Activated B cell treated with CpG ODN at 0.5 μM for 24 hours (primary cell): ENCODE measurements at regions of chr14 and their contacts with region 1.

Region 1: GRCh38 chr14:49852301-49853157 is at the start of gene NEMF:
- DNase-seq: peak; percentile 78
- ATAC-seq: peak; percentile 83
- H3K4me3 Mint-ChIP-seq: peak within 1 kb of the TSS; percentile 99
- H3K27ac Mint-ChIP-seq: peak within 1 kb of the TSS; percentile 98
- H3K4me1 Mint-ChIP-seq: peaks cover 47% of the 10 kb centered on the region
- H3K27me3 Mint-ChIP-seq: no peaks in the 10 kb centered on the region
- CTCF ChIP-seq: peak; percentile 27
- total RNA-seq, gene NEMF: 99.1 and 110 TPM in 2 replicates

Region 2: DNA sequence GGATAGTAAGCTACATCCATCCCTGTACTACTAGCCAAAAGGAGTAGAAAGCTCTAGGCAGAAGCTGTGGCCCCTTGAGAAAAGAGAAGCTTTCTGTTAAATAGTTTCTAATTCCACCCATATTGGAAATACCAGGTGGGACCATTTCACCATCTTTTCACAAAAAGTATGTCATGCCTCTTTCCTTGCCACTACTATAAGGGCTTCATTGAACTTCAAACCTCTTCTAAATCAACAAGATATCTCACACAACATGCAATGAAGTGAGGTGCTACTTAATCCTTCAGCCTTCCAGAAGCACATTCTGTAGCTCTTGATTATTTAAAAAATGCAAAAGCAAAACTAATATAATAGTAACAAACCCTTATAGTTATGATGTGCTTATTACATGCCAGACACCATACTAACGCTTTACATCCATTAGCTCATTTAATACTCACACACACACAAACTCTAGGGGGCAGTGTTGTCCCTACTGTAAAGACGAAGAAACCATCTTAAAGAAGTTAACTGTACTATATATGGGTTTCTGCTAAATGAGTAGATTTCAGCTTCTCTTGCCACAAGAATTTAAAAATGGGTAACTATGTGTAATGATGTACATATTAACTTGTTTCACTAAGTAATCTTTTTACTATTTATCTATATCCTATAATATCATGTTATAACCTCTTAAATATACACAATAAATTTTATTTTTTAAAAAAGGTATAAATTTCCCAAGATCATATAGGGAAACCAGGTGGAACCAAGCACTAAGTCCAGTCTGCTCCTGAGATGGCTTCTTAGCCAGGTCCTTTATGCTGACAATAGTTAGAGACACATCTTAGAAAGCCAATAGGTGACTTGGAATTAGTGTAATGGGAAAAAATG is 390.8 kb before region 1 on chr14:
- CTCF ChIA-PET with region 1: interaction called, 13 read pairs
- POLR2A ChIA-PET with region 1: no interaction called
- intact Hi-C with region 1: no loop called
- DNase-seq: no peak
- ATAC-seq: peak; percentile 81
- H3K4me3 Mint-ChIP-seq: no peak overlapping the region
- H3K27ac Mint-ChIP-seq: no peak overlapping the region
- H3K4me1 Mint-ChIP-seq: no peaks in the 10 kb centered on the region
- H3K27me3 Mint-ChIP-seq: peaks cover 5% of the 10 kb centered on the region
- CTCF ChIP-seq: peak; percentile 62

Region 3: DNA sequence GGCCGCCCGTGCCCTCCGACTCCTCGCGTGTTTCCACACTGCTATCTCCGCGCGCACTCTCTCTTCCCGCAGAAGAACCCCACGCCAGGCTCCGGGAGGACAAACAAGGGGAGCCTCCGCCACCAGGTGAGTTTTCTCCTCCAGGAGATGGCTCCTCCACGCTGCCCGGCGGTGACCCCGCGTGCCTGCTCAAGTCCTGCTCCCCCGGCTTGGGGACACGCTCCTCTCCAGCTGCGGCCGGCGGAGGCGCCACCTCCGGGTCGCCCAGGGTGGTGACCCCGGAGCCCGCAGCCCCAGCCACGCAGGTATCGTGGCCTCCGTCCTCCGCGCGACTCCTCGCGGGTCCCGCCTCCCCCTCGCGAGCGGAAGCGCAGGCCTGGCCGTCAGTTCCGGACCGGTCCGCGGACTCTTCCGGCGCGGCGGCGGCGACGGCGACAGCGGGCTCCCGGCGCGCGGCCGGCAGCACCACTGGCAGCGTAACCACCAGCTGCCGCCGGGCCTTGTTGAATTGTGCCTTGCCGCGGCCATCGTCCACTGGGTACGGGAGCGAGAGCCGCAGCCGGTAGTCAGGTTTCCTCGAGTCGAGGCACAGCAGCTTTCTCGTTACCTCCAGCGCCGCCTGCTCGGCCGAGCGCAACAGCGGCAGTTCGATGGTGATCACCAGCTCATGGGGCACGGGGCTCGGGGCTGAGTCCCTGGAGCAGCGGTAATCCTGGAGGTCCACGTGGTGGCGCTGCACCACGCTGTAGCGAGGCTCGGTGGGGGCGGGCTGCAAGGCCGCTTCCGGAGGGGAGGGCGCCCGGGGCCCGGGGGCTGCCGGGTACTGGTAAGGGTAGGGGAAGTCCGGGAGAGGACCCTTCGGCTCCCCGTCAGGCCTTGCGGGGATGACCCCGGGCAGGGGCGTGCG is 218.6 kb before region 1 on chr14:
- CTCF ChIA-PET with region 1: interaction called, 6 read pairs
- POLR2A ChIA-PET with region 1: interaction called, 29 read pairs
- intact Hi-C with region 1: loop called (anchors 1 kb)
- DNase-seq: peak; percentile 92
- ATAC-seq: peak; percentile 80
- H3K4me3 Mint-ChIP-seq: peak overlapping the region; percentile 96
- H3K27ac Mint-ChIP-seq: peak overlapping the region; percentile 98
- H3K4me1 Mint-ChIP-seq: peaks cover 66% of the 10 kb centered on the region
- H3K27me3 Mint-ChIP-seq: no peaks in the 10 kb centered on the region
- CTCF ChIP-seq: no peak

Region 4: GRCh38 chr14:49867831-49868723 is 15.5 kb after region 1 on chr14:
- CTCF ChIA-PET with region 1: interaction called, 77 read pairs
- POLR2A ChIA-PET with region 1: interaction called, 105 read pairs
- intact Hi-C with region 1: no loop called
- DNase-seq: peak; percentile 85
- ATAC-seq: peak; percentile 84
- H3K4me3 Mint-ChIP-seq: peak overlapping the region; percentile 95
- H3K27ac Mint-ChIP-seq: peak overlapping the region; percentile 100
- H3K4me1 Mint-ChIP-seq: peaks cover 44% of the 10 kb centered on the region
- H3K27me3 Mint-ChIP-seq: no peaks in the 10 kb centered on the region
- CTCF ChIP-seq: no peak

Region 5: GRCh38 chr14:50085570-50086320 is 233.2 kb after region 1 on chr14:
- CTCF ChIA-PET with region 1: interaction called, 16 read pairs
- POLR2A ChIA-PET with region 1: interaction called, 16 read pairs
- intact Hi-C with region 1: no loop called
- DNase-seq: peak; percentile 44
- ATAC-seq: peak; percentile 75
- H3K4me3 Mint-ChIP-seq: peak overlapping the region; percentile 68
- H3K27ac Mint-ChIP-seq: peak overlapping the region; percentile 97
- H3K4me1 Mint-ChIP-seq: peaks cover 92% of the 10 kb centered on the region
- H3K27me3 Mint-ChIP-seq: no peaks in the 10 kb centered on the region
- CTCF ChIP-seq: no peak

Region 6: DNA sequence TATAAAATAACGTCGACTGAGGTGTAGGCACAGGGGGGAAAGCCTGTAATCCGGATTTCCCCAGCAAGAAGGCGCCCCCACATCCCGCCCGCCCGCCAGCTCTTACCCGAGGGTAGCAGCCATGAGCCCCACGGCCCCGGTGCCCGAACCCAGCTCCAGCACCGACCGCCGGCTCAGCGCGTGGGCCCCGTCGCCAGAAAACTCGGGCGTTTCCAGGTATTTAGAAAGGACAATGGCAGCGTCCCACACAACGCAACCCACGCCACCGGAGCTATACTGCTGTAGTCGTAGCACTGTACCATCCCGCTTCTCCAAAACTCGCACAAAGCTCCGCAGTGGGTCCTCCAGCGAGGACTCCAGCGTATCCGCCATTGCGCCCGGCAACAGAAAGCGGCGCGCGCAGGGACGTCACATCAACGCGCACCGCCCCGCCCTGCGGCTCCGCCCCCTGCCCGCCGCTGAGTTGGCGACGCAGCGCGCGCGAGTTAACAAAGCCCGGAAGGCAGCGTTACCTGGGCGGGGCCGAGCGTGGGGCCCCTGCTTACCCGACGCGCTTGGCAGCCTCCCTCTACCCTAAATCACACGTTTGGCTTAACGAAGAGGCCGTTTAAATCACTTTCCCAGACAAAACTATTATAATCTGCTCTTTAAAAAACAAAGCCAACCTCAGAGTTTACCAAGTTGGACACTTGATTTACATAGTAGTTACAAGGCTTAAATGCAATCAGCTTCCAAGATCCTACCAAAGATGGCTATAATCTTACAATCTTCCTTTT is 263.8 kb after region 1 on chr14 and contains the start of gene VCPKMT:
- CTCF ChIA-PET with region 1: interaction called, 16 read pairs
- POLR2A ChIA-PET with region 1: interaction called, 29 read pairs
- intact Hi-C with region 1: loop called (anchors 1 kb)
- DNase-seq: peak; percentile 97
- ATAC-seq: peak; percentile 96
- H3K4me3 Mint-ChIP-seq: peak within 1 kb of the TSS; percentile 95
- H3K27ac Mint-ChIP-seq: peak within 1 kb of the TSS; percentile 97
- H3K4me1 Mint-ChIP-seq: peaks cover 51% of the 10 kb centered on the region
- H3K27me3 Mint-ChIP-seq: no peaks in the 10 kb centered on the region
- CTCF ChIP-seq: no peak
- total RNA-seq, gene VCPKMT: 19.9 and 20.8 TPM in 2 replicates

Region 7: GRCh38 chr14:50156111-50156510 is 303.6 kb after region 1 on chr14:
- CTCF ChIA-PET with region 1: no interaction called
- POLR2A ChIA-PET with region 1: no interaction called
- intact Hi-C with region 1: no loop called
- DNase-seq: no peak
- ATAC-seq: no peak
- H3K4me3 Mint-ChIP-seq: no peak overlapping the region
- H3K27ac Mint-ChIP-seq: no peak overlapping the region
- H3K4me1 Mint-ChIP-seq: peaks cover 4% of the 10 kb centered on the region
- H3K27me3 Mint-ChIP-seq: no peaks in the 10 kb centered on the region
- CTCF ChIP-seq: no peak

Region 8: GRCh38 chr14:50311975-50312733 is 459.6 kb after region 1 on chr14 and contains the starts of genes DMAC2L and L2HGDH:
- CTCF ChIA-PET with region 1: interaction called, 6 read pairs
- POLR2A ChIA-PET with region 1: interaction called, 6 read pairs
- intact Hi-C with region 1: loop called (anchors 2 kb)
- DNase-seq: peak; percentile 91
- ATAC-seq: peak; percentile 94
- H3K4me3 Mint-ChIP-seq: peak within 1 kb of the TSS; percentile 93
- H3K27ac Mint-ChIP-seq: peak within 1 kb of the TSS; percentile 98
- H3K4me1 Mint-ChIP-seq: peaks cover 34% of the 10 kb centered on the region
- H3K27me3 Mint-ChIP-seq: no peaks in the 10 kb centered on the region
- CTCF ChIP-seq: no peak
- total RNA-seq, gene DMAC2L: 31.2 and 32.2 TPM in 2 replicates
- total RNA-seq, gene L2HGDH: 4.3 and 5.2 TPM in 2 replicates